ENCODE measurements at regions of chr11 and their contacts with region 1.

Region 1: GRCh38 chr11:130145975-130146776 is 13.4 kb upstream of the ST14 start:
- DNase-seq: no peak
- ATAC-seq: peak; percentile 24 to 43 (median 36)
- H3K4me3 ChIP-seq: no peak overlapping the region
- H3K4me3 Mint-ChIP-seq: peak overlapping the region in 1 of 3 donors; percentile 14
- H3K27ac ChIP-seq: peak overlapping the region; percentile 49
- H3K27ac Mint-ChIP-seq: peak overlapping the region; percentile 45 to 55
- H3K4me1 ChIP-seq: peaks cover 0 to 15% of the 10 kb centered on the region in 2 experiments
- H3K4me1 Mint-ChIP-seq: peaks cover 13 to 26% (median 15%) of the 10 kb centered on the region in 3 donors
- H3K27me3 ChIP-seq: no peaks in the 10 kb centered on the region
- H3K27me3 Mint-ChIP-seq: peaks cover 0 to 1% of the 10 kb centered on the region in 2 donors

Region 2: GRCh38 chr11:129815596-129816461 is 330.3 kb before region 1 on chr11 and contains the start of gene TMEM45B:
- CTCF ChIA-PET with region 1: no interaction called
- POLR2A ChIA-PET with region 1: interaction called in 1 of 2 experiments, 10 read pairs
- DNase-seq: peak in 18 of 35 experiments; percentile 8 to 51 (median 27)
- ATAC-seq: peak; percentile 27 to 60 (median 58)
- H3K4me3 ChIP-seq: peak within 1 kb of the TSS; percentile 7 to 56
- H3K4me3 Mint-ChIP-seq: peak within 1 kb of the TSS; percentile 80 to 92 (median 80)
- H3K27ac ChIP-seq: no peak within 1 kb of the TSS
- H3K27ac Mint-ChIP-seq: peak within 1 kb of the TSS; percentile 88 to 95
- H3K4me1 ChIP-seq: peaks cover 3 to 31% of the 10 kb centered on the region in 2 experiments
- H3K4me1 Mint-ChIP-seq: peaks cover 41 to 73% (median 65%) of the 10 kb centered on the region in 3 donors
- H3K27me3 ChIP-seq: peaks cover 0 to 28% of the 10 kb centered on the region in 2 experiments
- H3K27me3 Mint-ChIP-seq: peaks cover 12 to 17% of the 10 kb centered on the region in 2 donors
- total RNA-seq, gene TMEM45B: 1.4 to 22.7 (median 14.3) TPM

Region 3: GRCh38 chr11:130159657-130160497 is 13.7 kb after region 1 on chr11 and contains the start of gene ST14:
- CTCF ChIA-PET with region 1: no interaction called
- POLR2A ChIA-PET with region 1: no interaction called
- DNase-seq: no peak
- ATAC-seq: no peak
- H3K4me3 ChIP-seq: peak within 1 kb of the TSS in 1 of 2 donors; percentile 1
- H3K4me3 Mint-ChIP-seq: peak within 1 kb of the TSS; percentile 55 to 72 (median 61)
- H3K27ac ChIP-seq: no peak within 1 kb of the TSS
- H3K27ac Mint-ChIP-seq: no peak within 1 kb of the TSS
- H3K4me1 ChIP-seq: peaks cover 0 to 9% of the 10 kb centered on the region in 2 experiments
- H3K4me1 Mint-ChIP-seq: peaks cover 12 to 23% (median 12%) of the 10 kb centered on the region in 3 donors
- H3K27me3 ChIP-seq: peaks cover 8 to 59% of the 10 kb centered on the region in 2 experiments
- H3K27me3 Mint-ChIP-seq: peaks cover 46 to 55% of the 10 kb centered on the region in 2 donors
- total RNA-seq, gene ST14: 0.49 to 1.5 (median 0.82) TPM

Region 4: DNA sequence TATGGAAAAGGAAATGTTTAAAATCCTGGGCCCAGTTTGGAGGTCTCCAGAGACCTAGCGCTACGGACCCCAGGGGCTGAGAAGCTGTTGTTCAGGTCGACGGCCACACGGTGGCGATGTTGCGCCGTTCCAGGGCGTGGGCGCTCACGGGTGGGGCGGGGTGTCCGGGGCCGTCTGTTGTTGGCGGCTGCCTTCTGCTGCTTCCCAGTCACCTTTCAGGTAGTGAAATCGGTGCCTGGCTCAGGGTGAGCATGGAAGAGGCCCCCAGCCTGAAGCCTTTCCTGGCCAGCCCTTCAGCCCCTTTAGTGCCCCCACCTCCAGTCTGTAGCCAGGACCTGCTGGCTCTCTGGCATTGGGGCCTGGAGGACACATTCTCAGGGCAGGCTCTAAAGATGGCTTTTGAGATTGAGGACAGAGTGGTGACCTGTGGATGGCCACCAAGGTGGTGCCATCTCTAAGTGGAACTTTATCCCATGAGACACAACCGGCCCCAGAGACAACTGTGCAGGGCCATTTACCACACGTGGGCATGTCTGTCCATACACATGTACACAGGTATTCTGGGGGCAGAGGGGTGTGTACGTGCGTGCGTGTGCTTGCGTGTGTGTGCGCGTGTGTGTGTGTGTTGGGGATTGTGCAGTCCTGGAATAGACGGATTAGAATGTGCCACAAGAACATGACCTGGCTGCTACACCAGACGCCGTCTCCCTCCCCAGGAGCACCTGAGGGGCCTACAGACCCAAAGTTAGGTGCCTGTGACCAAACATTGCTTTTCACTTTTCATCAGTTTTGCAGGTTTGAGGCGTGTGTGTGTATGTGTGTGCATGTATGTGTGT is 67.2 kb after region 1 on chr11:
- CTCF ChIA-PET with region 1: no interaction called
- POLR2A ChIA-PET with region 1: no interaction called
- DNase-seq: peak; percentile 17 to 82 (median 65)
- ATAC-seq: peak; percentile 87 to 93 (median 88)
- H3K4me3 ChIP-seq: no peak overlapping the region
- H3K4me3 Mint-ChIP-seq: no peak overlapping the region
- H3K27ac ChIP-seq: no peak overlapping the region
- H3K27ac Mint-ChIP-seq: no peak overlapping the region
- H3K4me1 ChIP-seq: peaks cover 0 to 8% of the 10 kb centered on the region in 2 experiments
- H3K4me1 Mint-ChIP-seq: peaks cover 0 to 4% (median 0%) of the 10 kb centered on the region in 3 donors
- H3K27me3 ChIP-seq: peaks cover 0 to 41% of the 10 kb centered on the region in 2 experiments
- H3K27me3 Mint-ChIP-seq: peaks cover 9 to 12% of the 10 kb centered on the region in 2 donors

Measured in T-cell (primary cell).